ENCODE measurements at regions of chr2 and their contacts with region 1.

Region 1: DNA sequence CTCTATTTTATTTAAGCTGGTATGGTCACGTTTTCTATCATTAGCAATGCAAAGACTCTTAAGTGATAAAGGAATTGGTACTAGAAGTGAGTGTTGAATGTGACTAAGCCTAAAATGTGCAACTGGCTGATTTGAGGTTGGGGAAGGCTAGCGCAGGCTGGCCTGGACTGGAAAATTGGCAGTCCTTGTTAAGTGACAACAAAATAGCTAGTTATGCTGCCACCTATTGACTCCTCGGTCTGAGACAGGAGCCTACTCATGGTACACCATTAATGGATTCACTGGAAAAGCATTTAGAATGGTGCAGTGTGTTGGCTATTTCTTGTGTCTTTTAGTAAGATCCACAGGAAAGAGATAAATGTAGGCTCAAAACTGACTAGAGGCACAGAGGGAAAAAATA is 5.7 kb upstream of the WIPF1 start:
- DNase-seq: peak; percentile 74
- ATAC-seq: peak; percentile 70
- H3K4me3 Mint-ChIP-seq: no peak overlapping the region
- H3K27ac Mint-ChIP-seq: peak overlapping the region; percentile 66
- H3K4me1 Mint-ChIP-seq: peaks cover 89% of the 10 kb centered on the region
- H3K27me3 Mint-ChIP-seq: no peaks in the 10 kb centered on the region

Region 2: GRCh38 chr2:174510583-174511189 is 92.6 kb before region 1 on chr2:
- CTCF ChIA-PET with region 1: no interaction called
- DNase-seq: no peak
- ATAC-seq: no peak
- H3K4me3 Mint-ChIP-seq: no peak overlapping the region
- H3K27ac Mint-ChIP-seq: no peak overlapping the region
- H3K4me1 Mint-ChIP-seq: peaks cover 4% of the 10 kb centered on the region
- H3K27me3 Mint-ChIP-seq: no peaks in the 10 kb centered on the region

Region 3: GRCh38 chr2:174682578-174683391 is 79.5 kb after region 1 on chr2:
- CTCF ChIA-PET with region 1: interaction called, 122 read pairs
- DNase-seq: peak; percentile 70
- ATAC-seq: peak; percentile 80
- H3K4me3 Mint-ChIP-seq: peak overlapping the region; percentile 83
- H3K27ac Mint-ChIP-seq: peak overlapping the region; percentile 87
- H3K4me1 Mint-ChIP-seq: peaks cover 63% of the 10 kb centered on the region
- H3K27me3 Mint-ChIP-seq: no peaks in the 10 kb centered on the region